Activated CD4-positive, alpha-beta memory T cell treated with anti-CD3 and anti-CD28 coated beads for 36 hours (primary cell): ENCODE measurements at regions of chr22 and their contacts with region 1.

Region 1: GRCh38 chr22:40728731-40729189 is 49.5 kb downstream of the MCHR1 start:
- DNase-seq: peak; percentile 79
- H3K4me3 Mint-ChIP-seq: peak overlapping the region; percentile 49
- H3K27ac Mint-ChIP-seq: peak overlapping the region; percentile 77
- H3K4me1 Mint-ChIP-seq: peaks cover 43% of the 10 kb centered on the region
- H3K27me3 Mint-ChIP-seq: no peaks in the 10 kb centered on the region

Region 2: GRCh38 chr22:40694411-40694810 is 34.3 kb before region 1 on chr22:
- CTCF ChIA-PET with region 1: no interaction called
- POLR2A ChIA-PET with region 1: no interaction called
- intact Hi-C with region 1: no loop called
- DNase-seq: no peak
- H3K4me3 Mint-ChIP-seq: no peak overlapping the region
- H3K27ac Mint-ChIP-seq: no peak overlapping the region
- H3K4me1 Mint-ChIP-seq: no peaks in the 10 kb centered on the region
- H3K27me3 Mint-ChIP-seq: no peaks in the 10 kb centered on the region

Region 3: DNA sequence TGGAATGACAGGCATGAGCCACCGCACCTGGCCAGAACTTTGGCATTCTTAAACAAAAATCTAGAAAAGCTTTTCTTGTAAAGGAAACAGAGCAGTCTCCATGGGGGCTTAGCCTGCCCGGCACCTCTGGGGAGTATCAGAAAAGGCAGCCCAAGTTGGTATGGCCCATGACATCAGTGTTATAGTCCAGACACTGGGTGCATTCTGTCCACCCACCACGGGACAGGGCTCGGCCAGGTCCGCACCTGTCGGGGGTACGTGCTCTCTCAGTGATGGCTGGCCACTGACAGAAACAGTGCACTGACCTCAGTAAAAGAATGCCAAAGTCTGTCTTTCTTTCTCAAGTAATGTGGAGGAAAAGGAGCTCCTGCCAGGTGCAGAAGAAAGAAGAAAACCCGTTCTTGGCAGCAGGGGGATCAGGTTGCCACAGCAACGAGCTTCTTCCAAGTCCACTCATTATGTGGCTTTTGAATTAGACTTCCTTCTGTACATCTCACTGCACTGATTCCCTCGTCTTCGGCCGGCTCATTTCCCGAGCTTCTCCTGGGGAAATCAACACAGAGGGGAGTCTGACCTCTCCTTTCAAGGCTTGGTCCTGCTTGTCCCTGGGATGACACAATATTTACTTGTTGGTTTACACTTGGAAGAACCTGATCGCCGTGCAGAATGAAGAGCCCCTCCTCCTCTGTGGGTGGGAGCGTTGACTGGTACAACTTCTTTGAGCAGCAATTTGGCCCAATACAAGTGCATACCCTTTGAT is 14.4 kb before region 1 on chr22:
- CTCF ChIA-PET with region 1: interaction called, 4 read pairs
- POLR2A ChIA-PET with region 1: interaction called, 4 read pairs
- intact Hi-C with region 1: loop called (anchors 1 kb)
- DNase-seq: no peak
- H3K4me3 Mint-ChIP-seq: no peak overlapping the region
- H3K27ac Mint-ChIP-seq: no peak overlapping the region
- H3K4me1 Mint-ChIP-seq: peaks cover 12% of the 10 kb centered on the region
- H3K27me3 Mint-ChIP-seq: peaks cover 7% of the 10 kb centered on the region